Naive thymus-derived CD4-positive, alpha-beta T cell (primary cell): ENCODE measurements at regions of chrX and their contacts with region 1.

Region 1: GRCh38 chrX:129781134-129781672 is 1.5 kb downstream of the SASH3 start:
- DNase-seq: peak; percentile 23 to 85 (median 77)
- ATAC-seq: peak; percentile 86
- H3K4me3 ChIP-seq: peak overlapping the region; percentile 93
- H3K4me3 Mint-ChIP-seq: peak overlapping the region; percentile 79 to 98 (median 92)
- H3K27ac ChIP-seq: peak overlapping the region; percentile 89
- H3K27ac Mint-ChIP-seq: peak overlapping the region; percentile 78 to 97 (median 93)
- H3K4me1 ChIP-seq: peaks cover 42 to 59% of the 10 kb centered on the region in 2 donors
- H3K4me1 Mint-ChIP-seq: peaks cover 25 to 76% (median 62%) of the 10 kb centered on the region in 7 donors
- H3K27me3 ChIP-seq: no peaks in the 10 kb centered on the region
- H3K27me3 Mint-ChIP-seq: no peaks in the 10 kb centered on the region

Region 2: DNA sequence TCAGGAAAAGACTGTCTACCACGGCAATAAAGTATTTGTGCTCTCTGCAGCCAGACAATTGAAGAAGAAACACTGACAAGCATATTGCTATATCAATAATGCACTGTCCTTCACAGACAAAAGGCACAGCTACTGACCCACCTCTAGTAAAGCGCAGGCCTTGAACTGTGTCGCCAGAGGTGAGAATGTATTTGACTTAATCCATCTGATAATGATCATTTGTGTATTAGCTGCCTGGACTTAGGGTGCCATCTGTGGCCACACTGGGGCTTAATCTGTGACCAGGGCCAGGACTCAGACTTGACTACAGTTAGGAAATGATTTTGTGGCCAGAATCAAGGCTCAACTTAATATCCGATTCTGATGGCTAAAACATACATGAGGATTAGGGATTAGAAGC is 518.3 kb before region 1 on chrX:
- CTCF ChIA-PET with region 1: no interaction called
- POLR2A ChIA-PET with region 1: no interaction called
- intact Hi-C with region 1: no loop called
- DNase-seq: no peak
- ATAC-seq: no peak
- H3K4me3 ChIP-seq: no peak overlapping the region
- H3K4me3 Mint-ChIP-seq: no peak overlapping the region
- H3K27ac ChIP-seq: no peak overlapping the region
- H3K27ac Mint-ChIP-seq: no peak overlapping the region
- H3K4me1 ChIP-seq: no peaks in the 10 kb centered on the region
- H3K4me1 Mint-ChIP-seq: peaks cover 0 to 3% (median 0%) of the 10 kb centered on the region in 7 donors
- H3K27me3 ChIP-seq: no peaks in the 10 kb centered on the region
- H3K27me3 Mint-ChIP-seq: peaks cover 0 to 6% (median 0%) of the 10 kb centered on the region in 5 donors

Region 3: GRCh38 chrX:129726307-129727111 is 54.7 kb before region 1 on chrX:
- CTCF ChIA-PET with region 1: interaction called, 4 read pairs
- POLR2A ChIA-PET with region 1: interaction called, 5 read pairs
- intact Hi-C with region 1: loop called in 1 of 2 experiments (anchors 1 kb)
- DNase-seq: peak in 1 of 9 donors; percentile 17
- ATAC-seq: no peak
- H3K4me3 ChIP-seq: no peak overlapping the region
- H3K4me3 Mint-ChIP-seq: no peak overlapping the region
- H3K27ac ChIP-seq: no peak overlapping the region
- H3K27ac Mint-ChIP-seq: peak overlapping the region in 1 of 9 donors; percentile 42
- H3K4me1 ChIP-seq: peaks cover 9 to 17% of the 10 kb centered on the region in 2 donors
- H3K4me1 Mint-ChIP-seq: peaks cover 22 to 68% (median 51%) of the 10 kb centered on the region in 7 donors
- H3K27me3 ChIP-seq: no peaks in the 10 kb centered on the region
- H3K27me3 Mint-ChIP-seq: no peaks in the 10 kb centered on the region

Region 4: DNA sequence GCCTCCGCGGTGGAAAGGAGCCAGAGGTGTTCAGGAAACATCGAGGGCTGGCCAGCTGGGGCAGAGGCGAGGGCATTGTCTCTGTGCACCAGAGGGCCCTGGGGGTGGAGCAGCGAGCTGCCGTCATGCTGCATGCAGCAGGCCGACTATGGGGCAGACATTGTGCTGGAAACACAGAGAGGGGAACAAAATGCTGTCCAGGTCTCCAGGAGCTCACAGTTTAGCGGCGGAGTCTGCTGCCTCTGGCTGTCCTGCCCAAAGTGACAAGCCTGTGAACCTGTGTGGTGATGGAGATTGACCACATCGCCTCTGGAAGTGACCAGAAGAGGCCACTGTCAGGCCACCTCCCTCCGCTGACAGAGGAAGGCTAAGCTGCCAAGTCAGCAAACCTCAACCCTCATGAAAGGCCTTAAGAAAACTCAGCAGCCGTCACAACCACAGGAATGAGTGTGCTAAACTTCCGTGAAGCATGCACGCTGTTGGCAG is 21.6 kb before region 1 on chrX:
- CTCF ChIA-PET with region 1: interaction called, 8 read pairs
- POLR2A ChIA-PET with region 1: interaction called, 167 read pairs
- intact Hi-C with region 1: loop called (anchors 1 kb)
- DNase-seq: peak in 8 of 9 donors; percentile 40 to 69 (median 59)
- ATAC-seq: peak; percentile 85
- H3K4me3 ChIP-seq: no peak overlapping the region
- H3K4me3 Mint-ChIP-seq: peak overlapping the region; percentile 8 to 64 (median 51)
- H3K27ac ChIP-seq: no peak overlapping the region
- H3K27ac Mint-ChIP-seq: peak overlapping the region in 7 of 9 donors; percentile 10 to 90 (median 31)
- H3K4me1 ChIP-seq: peaks cover 50 to 55% of the 10 kb centered on the region in 2 donors
- H3K4me1 Mint-ChIP-seq: peaks cover 16 to 67% (median 59%) of the 10 kb centered on the region in 7 donors
- H3K27me3 ChIP-seq: no peaks in the 10 kb centered on the region
- H3K27me3 Mint-ChIP-seq: no peaks in the 10 kb centered on the region

Region 5: GRCh38 chrX:129823115-129823514 is 41.9 kb after region 1 on chrX:
- CTCF ChIA-PET with region 1: interaction called, 8 read pairs
- POLR2A ChIA-PET with region 1: interaction called, 4 read pairs
- intact Hi-C with region 1: loop called (anchors 2 kb)
- DNase-seq: peak in 8 of 9 donors; percentile 23 to 68 (median 52)
- ATAC-seq: peak; percentile 81
- H3K4me3 ChIP-seq: no peak overlapping the region
- H3K4me3 Mint-ChIP-seq: no peak overlapping the region
- H3K27ac ChIP-seq: no peak overlapping the region
- H3K27ac Mint-ChIP-seq: peak overlapping the region in 1 of 9 donors; percentile 83
- H3K4me1 ChIP-seq: peaks cover 0 to 6% of the 10 kb centered on the region in 2 donors
- H3K4me1 Mint-ChIP-seq: peaks cover 0 to 21% (median 14%) of the 10 kb centered on the region in 7 donors
- H3K27me3 ChIP-seq: no peaks in the 10 kb centered on the region
- H3K27me3 Mint-ChIP-seq: no peaks in the 10 kb centered on the region

Region 6: DNA sequence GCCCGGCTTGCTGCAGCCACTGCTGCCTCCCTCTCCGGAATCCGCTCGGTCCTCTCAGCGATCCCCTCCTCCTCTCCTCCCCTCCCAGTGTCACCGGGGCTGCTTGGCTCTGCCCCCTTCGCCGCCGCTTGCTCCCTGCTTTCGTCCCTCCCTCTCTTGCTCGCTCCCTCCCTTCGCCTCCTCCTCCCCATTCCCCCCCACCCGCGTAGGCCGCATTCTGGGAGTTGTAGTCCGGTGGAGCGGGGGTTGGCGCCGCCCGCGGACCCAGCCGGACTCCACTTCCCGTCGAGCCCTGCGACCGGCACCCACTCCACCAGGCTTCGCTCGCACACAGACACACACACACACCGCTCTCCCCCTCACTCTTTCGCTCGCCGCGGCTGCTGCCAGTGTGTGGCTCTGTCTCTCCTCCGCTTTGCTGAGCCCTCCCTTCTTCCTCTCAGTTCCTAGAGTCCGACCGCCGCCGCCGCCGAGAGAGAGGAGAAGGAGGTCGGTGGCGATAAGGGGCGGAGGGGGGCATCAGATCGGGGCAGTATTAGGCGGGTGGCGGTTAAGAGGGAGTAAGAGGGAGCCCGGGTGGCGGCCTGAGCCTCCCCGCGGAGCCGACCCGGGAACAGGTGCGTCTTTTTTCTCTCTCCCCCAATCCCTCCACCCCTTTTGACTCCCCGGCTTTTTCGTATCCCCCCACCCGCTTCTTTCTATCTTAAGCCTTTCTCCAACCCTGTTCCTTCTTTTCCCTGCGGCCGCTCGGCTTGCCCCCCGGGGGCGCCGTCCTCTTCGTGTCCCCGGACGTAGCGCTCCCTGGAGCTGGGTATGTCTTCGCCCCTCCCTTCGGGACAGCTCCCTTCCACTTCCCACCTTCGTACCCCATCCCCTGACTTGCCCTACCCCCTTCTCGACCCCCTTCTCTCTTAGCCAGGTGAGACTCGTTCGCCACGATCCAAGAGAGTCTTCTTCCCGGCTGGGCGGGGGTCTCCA is 201.4 kb after region 1 on chrX and contains the start of gene BCORL1:
- CTCF ChIA-PET with region 1: no interaction called
- POLR2A ChIA-PET with region 1: no interaction called
- intact Hi-C with region 1: loop called in 1 of 2 experiments (anchors 5 kb)
- DNase-seq: peak; percentile 62 to 89 (median 84)
- ATAC-seq: peak; percentile 96
- H3K4me3 ChIP-seq: peak within 1 kb of the TSS; percentile 61
- H3K4me3 Mint-ChIP-seq: peak within 1 kb of the TSS in 1 of 10 donors; percentile 85
- H3K27ac ChIP-seq: no peak within 1 kb of the TSS
- H3K27ac Mint-ChIP-seq: peak within 1 kb of the TSS in 7 of 9 donors; percentile 31 to 82 (median 59)
- H3K4me1 ChIP-seq: no peaks in the 10 kb centered on the region
- H3K4me1 Mint-ChIP-seq: peaks cover 19 to 34% (median 27%) of the 10 kb centered on the region in 7 donors
- H3K27me3 ChIP-seq: no peaks in the 10 kb centered on the region
- H3K27me3 Mint-ChIP-seq: peaks cover 0 to 30% (median 0%) of the 10 kb centered on the region in 5 donors
- total RNA-seq, gene BCORL1: 5.8 to 8.9 (median 8.2) TPM